Mammary epithelial cell (primary cell): ENCODE measurements at regions of chr19 and their contacts with region 1.

Region 1: GRCh38 chr19:3075895-3076431 is 13.7 kb upstream of the TLE5 start:
- DNase-seq: peak; percentile 38
- H3K4me3 ChIP-seq: peak overlapping the region in 1 of 3 experiments; percentile 16
- H3K27ac ChIP-seq: no peak overlapping the region
- H3K4me1 ChIP-seq: peaks cover 6% of the 10 kb centered on the region
- H3K27me3 ChIP-seq: no peaks in the 10 kb centered on the region
- CTCF ChIP-seq: peak; percentile 69 to 94

Region 2: GRCh38 chr19:2962045-2962561 is 113.9 kb before region 1 on chr19:
- CTCF ChIA-PET with region 1: no interaction called
- dilution Hi-C with region 1: no loop called
- in situ Hi-C with region 1: no loop called
- intact Hi-C with region 1: loop called (anchors 1 kb)
- DNase-seq: peak; percentile 38
- H3K4me3 ChIP-seq: no peak overlapping the region
- H3K27ac ChIP-seq: no peak overlapping the region
- H3K4me1 ChIP-seq: no peaks in the 10 kb centered on the region
- H3K27me3 ChIP-seq: no peaks in the 10 kb centered on the region
- CTCF ChIP-seq: peak; percentile 45 to 66

Region 3: GRCh38 chr19:3108775-3109174 is 32.8 kb after region 1 on chr19:
- CTCF ChIA-PET with region 1: no interaction called
- dilution Hi-C with region 1: no loop called
- in situ Hi-C with region 1: no loop called
- intact Hi-C with region 1: loop called (anchors 1 kb)
- DNase-seq: peak; percentile 36
- H3K4me3 ChIP-seq: no peak overlapping the region
- H3K27ac ChIP-seq: no peak overlapping the region
- H3K4me1 ChIP-seq: no peaks in the 10 kb centered on the region
- H3K27me3 ChIP-seq: no peaks in the 10 kb centered on the region
- CTCF ChIP-seq: peak; percentile 73 to 83

Region 4: DNA sequence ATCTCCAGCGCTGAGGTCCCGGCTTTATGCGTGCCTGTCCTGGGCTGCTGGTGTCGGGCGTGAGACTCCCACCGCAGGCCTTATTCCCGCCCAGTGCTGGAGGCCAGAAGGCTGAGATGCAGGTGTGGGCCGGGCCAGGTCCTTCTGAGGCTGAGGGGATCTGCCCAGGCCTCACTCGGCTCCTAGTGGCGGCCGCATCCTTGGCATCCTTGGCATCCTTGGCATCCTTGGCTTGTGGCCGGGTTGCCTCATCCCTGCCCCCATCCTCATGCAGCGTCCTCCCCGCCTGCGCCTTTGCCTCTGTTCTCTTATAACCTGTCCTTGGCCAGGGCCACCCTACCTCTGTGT is 40.3 kb after region 1 on chr19:
- CTCF ChIA-PET with region 1: no interaction called
- dilution Hi-C with region 1: loop called (anchors 5 kb)
- in situ Hi-C with region 1: no loop called
- intact Hi-C with region 1: no loop called
- DNase-seq: peak; percentile 52
- H3K4me3 ChIP-seq: no peak overlapping the region
- H3K27ac ChIP-seq: peak overlapping the region; percentile 17
- H3K4me1 ChIP-seq: peaks cover 19% of the 10 kb centered on the region
- H3K27me3 ChIP-seq: no peaks in the 10 kb centered on the region
- CTCF ChIP-seq: no peak

Region 5: DNA sequence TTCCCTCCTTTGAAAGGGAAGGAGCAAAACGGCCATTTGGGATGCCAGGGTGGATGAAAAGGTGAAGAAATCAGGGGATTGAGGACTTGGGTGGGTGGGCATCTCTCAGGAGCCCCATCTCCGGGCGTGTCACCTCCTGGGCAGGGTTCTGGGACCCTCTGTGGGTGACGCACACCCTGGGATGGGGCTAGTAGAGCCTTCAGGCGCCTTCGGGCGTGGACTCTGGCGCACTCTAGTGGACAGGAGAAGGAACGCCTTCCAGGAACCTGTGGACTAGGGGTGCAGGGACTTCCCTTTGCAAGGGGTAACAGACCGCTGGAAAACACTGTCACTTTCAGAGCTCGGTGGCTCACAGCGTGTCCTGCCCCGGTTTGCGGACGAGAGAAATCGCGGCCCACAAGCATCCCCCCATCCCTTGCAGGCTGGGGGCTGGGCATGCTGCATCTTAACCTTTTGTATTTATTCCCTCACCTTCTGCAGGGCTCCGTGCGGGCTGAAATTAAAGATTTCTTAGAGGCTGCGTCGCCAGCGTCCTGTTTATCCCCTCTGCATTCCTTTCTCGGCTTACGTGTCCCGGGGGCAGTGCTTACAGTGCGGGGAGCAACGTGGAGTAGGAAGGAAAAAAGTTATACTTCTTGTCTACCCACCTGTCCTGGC is 87.4 kb after region 1 on chr19:
- CTCF ChIA-PET with region 1: interaction called, 22 read pairs
- dilution Hi-C with region 1: no loop called
- in situ Hi-C with region 1: loop called in 1 of 2 experiments (anchors 10 kb)
- intact Hi-C with region 1: loop called (anchors 1 kb)
- DNase-seq: peak; percentile 25
- H3K4me3 ChIP-seq: no peak overlapping the region
- H3K27ac ChIP-seq: no peak overlapping the region
- H3K4me1 ChIP-seq: peaks cover 15% of the 10 kb centered on the region
- H3K27me3 ChIP-seq: no peaks in the 10 kb centered on the region
- CTCF ChIP-seq: peak; percentile 86 to 97

Region 6: DNA sequence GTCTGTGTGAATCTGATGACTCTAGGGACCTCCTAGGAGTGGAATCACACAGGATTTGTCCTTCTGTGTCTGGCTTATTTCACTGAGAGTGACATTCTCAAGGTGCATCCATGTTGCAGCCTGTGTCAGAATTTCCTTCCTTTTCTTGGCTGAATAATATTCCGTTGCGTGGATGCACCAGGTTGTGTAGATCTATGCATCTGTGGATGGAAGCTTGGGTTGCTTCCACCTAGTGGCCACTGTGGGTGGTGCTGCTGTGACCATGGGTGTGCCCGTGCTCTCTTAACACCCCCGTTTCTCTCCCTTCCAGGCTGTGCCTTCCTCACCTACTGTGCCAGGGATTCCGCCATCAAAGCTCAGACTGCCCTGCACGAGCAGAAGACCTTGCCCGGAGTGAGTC is 174.7 kb after region 1 on chr19:
- CTCF ChIA-PET with region 1: no interaction called
- dilution Hi-C with region 1: no loop called
- in situ Hi-C with region 1: no loop called
- intact Hi-C with region 1: loop called (anchors 1 kb)
- DNase-seq: no peak
- H3K4me3 ChIP-seq: no peak overlapping the region
- H3K27ac ChIP-seq: no peak overlapping the region
- H3K4me1 ChIP-seq: no peaks in the 10 kb centered on the region
- H3K27me3 ChIP-seq: no peaks in the 10 kb centered on the region
- CTCF ChIP-seq: peak; percentile 56 to 68

Region 7: DNA sequence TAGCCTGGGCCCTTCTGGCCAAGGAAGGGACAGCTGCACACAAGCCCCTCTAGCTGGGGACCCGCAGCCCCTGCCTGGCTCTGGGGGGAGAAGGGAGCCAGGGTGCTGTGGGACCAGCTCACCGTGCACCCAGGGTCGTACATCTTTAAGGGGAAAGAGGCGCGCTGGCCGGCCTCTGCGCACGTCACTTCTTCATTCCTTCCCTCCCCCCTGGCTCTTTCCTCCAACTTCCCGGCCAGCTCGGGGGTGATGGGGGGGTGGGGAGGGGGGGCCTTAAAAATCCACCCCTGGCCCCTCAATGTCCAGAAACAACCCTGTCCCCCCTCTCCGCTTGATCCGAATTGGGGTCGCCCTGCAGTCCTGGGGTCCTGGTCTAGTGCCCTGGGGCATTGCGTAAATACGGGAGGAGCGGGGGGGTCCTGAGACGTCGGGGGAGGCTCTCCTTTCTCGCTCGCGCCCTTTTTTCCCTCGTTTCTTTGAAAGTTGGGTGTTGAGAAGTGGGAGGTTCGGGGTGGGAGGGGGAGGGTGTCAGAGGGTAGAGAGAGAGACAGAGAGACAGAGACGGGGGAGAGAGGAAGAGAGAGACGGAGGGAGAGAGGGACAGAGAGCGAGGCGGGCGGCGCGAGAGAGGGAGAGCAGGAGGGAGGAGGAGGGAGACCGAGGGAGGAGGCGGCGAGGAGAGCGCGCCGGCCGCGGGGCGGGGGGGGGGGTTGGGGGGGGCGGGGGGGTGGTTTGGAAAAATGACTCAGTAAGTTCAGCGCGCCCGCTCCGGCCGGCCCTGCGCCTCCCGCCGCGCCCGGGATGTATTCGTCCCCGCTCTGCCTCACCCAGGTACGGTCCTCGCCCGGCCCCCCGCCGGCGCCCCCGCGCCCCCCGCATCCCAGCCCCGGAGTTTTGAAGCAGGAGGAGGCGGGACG is 290.1 kb after region 1 on chr19 and contains the start of gene NFIC:
- CTCF ChIA-PET with region 1: no interaction called
- dilution Hi-C with region 1: no loop called
- in situ Hi-C with region 1: no loop called
- intact Hi-C with region 1: no loop called
- DNase-seq: peak; percentile 69
- H3K4me3 ChIP-seq: peak within 1 kb of the TSS; percentile 84 to 87 (median 84)
- H3K27ac ChIP-seq: peak within 1 kb of the TSS; percentile 51
- H3K4me1 ChIP-seq: peaks cover 41% of the 10 kb centered on the region
- H3K27me3 ChIP-seq: no peaks in the 10 kb centered on the region
- CTCF ChIP-seq: no peak
- total RNA-seq, gene NFIC: 43.7 to 77.5 TPM